IMR-90 (cell line): ENCODE measurements at regions of chr12 and their contacts with region 1.

Region 1: DNA sequence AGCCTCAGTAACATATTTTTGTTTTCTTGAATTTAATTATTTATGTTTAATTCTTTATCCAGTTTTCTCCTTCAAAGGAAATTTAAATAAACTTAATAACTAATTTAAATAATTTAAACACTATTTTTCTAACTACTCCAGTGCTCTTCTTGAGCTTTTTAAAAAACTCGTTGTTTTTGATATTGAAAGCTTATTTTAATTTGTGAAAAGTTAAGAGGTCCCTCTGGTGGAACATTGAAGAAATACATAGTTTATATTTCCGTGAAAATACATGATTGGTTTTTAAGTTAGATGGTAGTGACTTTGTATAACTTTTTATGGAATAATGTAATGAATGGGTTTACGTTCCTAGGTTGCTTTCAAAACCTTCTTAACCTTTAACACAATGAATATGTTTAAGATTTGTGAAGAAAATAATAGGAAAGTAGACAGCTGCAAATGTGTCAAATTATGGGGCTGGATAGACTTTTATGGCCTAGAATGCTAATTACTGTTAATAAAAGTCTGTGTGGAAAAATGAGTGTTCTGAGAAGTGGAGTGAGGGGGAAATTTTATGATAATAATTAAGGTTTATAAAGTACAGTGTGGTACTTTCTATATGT is 45.9 kb upstream of the MSRB3 start:
- DNase-seq: peak; percentile 38
- ATAC-seq: peak; percentile 65
- H3K4me3 ChIP-seq: no peak overlapping the region
- H3K27ac ChIP-seq: no peak overlapping the region
- H3K4me1 ChIP-seq: no peaks in the 10 kb centered on the region
- H3K27me3 ChIP-seq: no peaks in the 10 kb centered on the region
- CTCF ChIP-seq: peak; percentile 47
- POLR2A ChIP-seq: no peak
- RAD21 ChIP-seq: peak; percentile 36

Region 2: GRCh38 chr12:65015850-65016249 is 216.7 kb before region 1 on chr12:
- CTCF ChIA-PET with region 1: no interaction called
- POLR2A ChIA-PET with region 1: no interaction called
- dilution Hi-C with region 1: no loop called
- in situ Hi-C with region 1: no loop called
- intact Hi-C with region 1: no loop called
- DNase-seq: no peak
- ATAC-seq: no peak
- H3K4me3 ChIP-seq: no peak overlapping the region
- H3K27ac ChIP-seq: no peak overlapping the region
- H3K4me1 ChIP-seq: no peaks in the 10 kb centered on the region
- H3K27me3 ChIP-seq: peaks cover 11% of the 10 kb centered on the region
- CTCF ChIP-seq: no peak
- POLR2A ChIP-seq: no peak
- RAD21 ChIP-seq: no peak

Region 3: GRCh38 chr12:65121049-65121955 is 111.3 kb before region 1 on chr12 and contains the start of gene WIF1:
- CTCF ChIA-PET with region 1: no interaction called
- POLR2A ChIA-PET with region 1: no interaction called
- dilution Hi-C with region 1: no loop called
- in situ Hi-C with region 1: no loop called
- intact Hi-C with region 1: loop called (anchors 5 kb)
- DNase-seq: no peak
- ATAC-seq: peak; percentile 51
- H3K4me3 ChIP-seq: peak within 1 kb of the TSS; percentile 25; the same call in 1 of the 2 replicates
- H3K27ac ChIP-seq: no peak within 1 kb of the TSS
- H3K4me1 ChIP-seq: peaks cover 3% of the 10 kb centered on the region
- H3K27me3 ChIP-seq: peaks cover 49% of the 10 kb centered on the region
- CTCF ChIP-seq: peak; percentile 32; the same call in 1 of the 2 replicates
- POLR2A ChIP-seq: no peak
- RAD21 ChIP-seq: no peak
- total RNA-seq, gene WIF1: not detected in 2 replicates